ENCODE measurements at regions of chr6 and their contacts with region 1.

Region 1: DNA sequence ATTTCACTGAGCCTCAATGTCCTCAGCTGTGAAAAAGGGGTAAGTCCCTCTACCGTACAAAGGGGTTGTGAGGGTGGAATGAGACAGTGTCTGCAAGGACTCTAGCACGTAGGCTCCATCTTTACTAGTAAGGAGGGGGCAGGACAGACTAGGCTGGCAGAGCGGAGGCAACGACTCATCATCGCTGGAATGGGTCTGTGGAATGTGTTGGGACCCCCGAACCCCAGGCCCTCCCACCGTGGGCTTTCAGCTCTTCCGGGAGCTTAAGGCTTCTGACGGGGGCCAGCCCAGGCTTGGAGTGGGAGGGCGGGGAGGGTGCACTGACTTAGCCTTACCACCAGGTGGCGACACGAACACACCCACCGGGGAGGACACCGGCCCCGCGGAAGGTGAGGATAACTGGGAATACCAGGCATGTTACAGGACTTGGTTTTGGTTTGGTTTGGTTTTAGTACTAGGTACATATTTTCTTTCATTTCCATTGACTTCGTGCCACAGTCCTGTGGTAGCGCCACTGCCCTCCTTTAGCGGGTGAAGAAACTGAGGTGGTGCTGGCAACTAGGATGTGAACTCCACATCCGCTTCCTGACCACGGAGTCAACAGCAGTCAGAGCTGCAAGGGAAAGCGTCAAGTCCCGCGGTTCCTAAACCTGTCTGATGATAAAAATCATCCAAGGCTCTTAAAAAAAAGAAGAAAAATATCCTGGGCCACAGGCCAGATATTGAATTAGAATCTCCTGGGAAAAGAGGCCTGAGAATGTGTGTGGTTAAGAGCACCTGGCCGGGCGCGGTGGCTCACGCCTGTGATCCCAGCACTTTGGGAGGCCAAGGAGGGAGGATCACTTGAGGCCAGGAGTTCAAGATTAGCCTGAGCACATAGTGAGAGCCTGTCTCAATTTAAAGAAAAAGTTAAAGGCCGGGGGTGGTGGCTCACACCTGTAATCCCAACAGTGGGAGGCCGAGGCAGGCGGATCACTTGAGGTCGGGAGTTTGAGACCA is 10.3 kb upstream of the TULP1 start:
- DNase-seq: peak; percentile 87
- H3K4me3 Mint-ChIP-seq: peak overlapping the region; percentile 63
- H3K27ac Mint-ChIP-seq: peak overlapping the region; percentile 61
- H3K4me1 Mint-ChIP-seq: peaks cover 5% of the 10 kb centered on the region
- H3K27me3 Mint-ChIP-seq: no peaks in the 10 kb centered on the region

Region 2: DNA sequence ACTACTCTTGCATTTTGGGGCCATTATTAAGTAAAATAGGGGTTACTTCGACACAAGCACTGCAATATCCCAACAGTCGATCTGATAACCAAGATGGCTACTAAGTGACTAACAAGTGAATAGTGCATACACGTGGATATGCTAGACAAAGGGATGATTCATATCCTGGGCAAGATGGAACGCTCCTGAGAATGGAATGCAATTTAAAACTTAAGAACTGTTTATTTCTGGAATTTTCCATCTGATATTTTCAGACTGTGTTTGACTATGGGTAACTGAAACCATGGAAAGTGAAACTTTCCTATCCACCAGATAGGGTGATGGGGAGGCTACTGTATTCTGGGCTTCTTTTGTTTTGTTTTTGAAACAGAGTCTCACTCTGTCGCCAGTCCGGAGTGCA is 892.9 kb before region 1 on chr6:
- CTCF ChIA-PET with region 1: no interaction called
- intact Hi-C with region 1: no loop called
- DNase-seq: no peak
- H3K4me3 Mint-ChIP-seq: no peak overlapping the region
- H3K27ac Mint-ChIP-seq: no peak overlapping the region
- H3K4me1 Mint-ChIP-seq: peaks cover 11% of the 10 kb centered on the region
- H3K27me3 Mint-ChIP-seq: no peaks in the 10 kb centered on the region

Region 3: GRCh38 chr6:35552285-35552917 is 29.4 kb after region 1 on chr6:
- CTCF ChIA-PET with region 1: interaction called, 38 read pairs
- intact Hi-C with region 1: loop called (anchors 1 kb)
- DNase-seq: peak; percentile 78
- H3K4me3 Mint-ChIP-seq: no peak overlapping the region
- H3K27ac Mint-ChIP-seq: no peak overlapping the region
- H3K4me1 Mint-ChIP-seq: no peaks in the 10 kb centered on the region
- H3K27me3 Mint-ChIP-seq: no peaks in the 10 kb centered on the region

Region 4: DNA sequence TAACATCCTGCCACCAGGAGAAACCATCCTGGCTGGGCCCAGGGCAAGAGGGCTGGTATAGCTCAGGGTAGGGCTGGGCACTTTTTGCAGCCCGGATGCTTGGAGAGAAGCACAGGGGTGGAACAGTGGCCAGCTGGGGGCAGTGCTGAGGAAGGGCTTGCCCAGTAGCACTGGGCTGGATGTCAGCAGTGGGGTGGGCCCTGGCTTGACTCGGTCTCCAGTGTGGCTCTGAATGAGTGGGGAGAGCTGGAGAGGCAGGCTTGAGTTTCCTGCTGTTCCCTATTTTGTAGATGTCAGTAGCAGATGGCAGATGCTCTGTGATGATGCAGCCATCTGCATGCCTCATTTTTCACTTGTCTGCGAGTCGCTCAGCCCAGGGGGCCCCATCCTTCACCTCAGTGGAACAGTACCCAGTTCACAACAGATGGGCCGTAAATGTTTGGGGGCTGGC is 46.1 kb after region 1 on chr6:
- CTCF ChIA-PET with region 1: interaction called, 4 read pairs
- intact Hi-C with region 1: loop called (anchors 5 kb)
- DNase-seq: peak; percentile 68
- H3K4me3 Mint-ChIP-seq: no peak overlapping the region
- H3K27ac Mint-ChIP-seq: no peak overlapping the region
- H3K4me1 Mint-ChIP-seq: no peaks in the 10 kb centered on the region
- H3K27me3 Mint-ChIP-seq: no peaks in the 10 kb centered on the region

Region 5: GRCh38 chr6:35583893-35584688 is 61.1 kb after region 1 on chr6:
- CTCF ChIA-PET with region 1: interaction called, 6 read pairs
- intact Hi-C with region 1: loop called (anchors 1 kb)
- DNase-seq: peak; percentile 87
- H3K4me3 Mint-ChIP-seq: no peak overlapping the region
- H3K27ac Mint-ChIP-seq: peak overlapping the region; percentile 37
- H3K4me1 Mint-ChIP-seq: peaks cover 64% of the 10 kb centered on the region
- H3K27me3 Mint-ChIP-seq: no peaks in the 10 kb centered on the region

Region 6: GRCh38 chr6:35737413-35738211 is 214.7 kb after region 1 on chr6:
- CTCF ChIA-PET with region 1: interaction called, 117 read pairs
- intact Hi-C with region 1: loop called (anchors 1 kb)
- DNase-seq: no peak
- H3K4me3 Mint-ChIP-seq: peak overlapping the region; percentile 29
- H3K27ac Mint-ChIP-seq: peak overlapping the region; percentile 77
- H3K4me1 Mint-ChIP-seq: peaks cover 47% of the 10 kb centered on the region
- H3K27me3 Mint-ChIP-seq: no peaks in the 10 kb centered on the region

Region 7: GRCh38 chr6:35757456-35758123 is 234.6 kb after region 1 on chr6:
- CTCF ChIA-PET with region 1: interaction called, 3 read pairs
- intact Hi-C with region 1: loop called (anchors 5 kb)
- DNase-seq: peak; percentile 31
- H3K4me3 Mint-ChIP-seq: no peak overlapping the region
- H3K27ac Mint-ChIP-seq: no peak overlapping the region
- H3K4me1 Mint-ChIP-seq: peaks cover 2% of the 10 kb centered on the region
- H3K27me3 Mint-ChIP-seq: peaks cover 25% of the 10 kb centered on the region